ENCODE measurements at regions of chr6 and their contacts with region 1.

Region 1: DNA sequence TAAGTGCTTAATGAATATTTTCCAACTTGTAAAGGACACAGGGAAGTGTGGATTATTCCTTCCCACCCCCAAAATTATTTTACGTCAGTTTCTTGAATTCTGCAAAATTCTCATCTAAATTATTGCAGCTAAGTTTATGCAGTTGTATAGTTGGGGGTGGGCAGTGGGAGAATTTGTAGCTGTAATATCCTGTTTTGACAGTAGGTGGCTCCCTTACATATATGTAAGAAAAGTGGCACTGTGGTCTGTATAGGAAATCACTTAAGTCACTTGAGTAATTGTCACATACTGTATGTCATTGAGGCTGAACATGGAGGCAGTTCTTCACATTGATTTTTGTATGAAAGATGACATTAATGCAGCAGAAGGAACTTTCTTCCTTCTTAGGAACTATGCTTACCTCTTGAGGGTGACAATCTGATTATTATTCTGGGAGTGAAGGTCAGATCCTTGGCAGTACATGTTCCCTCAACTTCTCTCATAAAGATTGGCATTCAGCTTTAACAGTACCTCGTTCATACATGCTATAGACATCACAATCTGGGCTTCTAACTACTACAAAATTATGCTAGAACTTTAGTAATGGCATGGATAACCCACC is 14.7 kb upstream of the CFAP206 start:
- DNase-seq: peak; percentile 38
- CTCF ChIP-seq: peak; percentile 51

Region 2: GRCh38 chr6:87078983-87079616 is 314.0 kb before region 1 on chr6:
- CTCF ChIA-PET with region 1: interaction called, 13 read pairs
- POLR2A ChIA-PET with region 1: no interaction called
- DNase-seq: peak; percentile 64
- CTCF ChIP-seq: peak; percentile 75

Region 3: GRCh38 chr6:87356181-87356580 is 36.9 kb before region 1 on chr6:
- CTCF ChIA-PET with region 1: no interaction called
- POLR2A ChIA-PET with region 1: no interaction called
- DNase-seq: no peak
- CTCF ChIP-seq: no peak

Region 4: GRCh38 chr6:87366072-87366827 is 26.9 kb before region 1 on chr6:
- CTCF ChIA-PET with region 1: interaction called, 12 read pairs
- POLR2A ChIA-PET with region 1: no interaction called
- DNase-seq: no peak
- CTCF ChIP-seq: no peak

Region 5: DNA sequence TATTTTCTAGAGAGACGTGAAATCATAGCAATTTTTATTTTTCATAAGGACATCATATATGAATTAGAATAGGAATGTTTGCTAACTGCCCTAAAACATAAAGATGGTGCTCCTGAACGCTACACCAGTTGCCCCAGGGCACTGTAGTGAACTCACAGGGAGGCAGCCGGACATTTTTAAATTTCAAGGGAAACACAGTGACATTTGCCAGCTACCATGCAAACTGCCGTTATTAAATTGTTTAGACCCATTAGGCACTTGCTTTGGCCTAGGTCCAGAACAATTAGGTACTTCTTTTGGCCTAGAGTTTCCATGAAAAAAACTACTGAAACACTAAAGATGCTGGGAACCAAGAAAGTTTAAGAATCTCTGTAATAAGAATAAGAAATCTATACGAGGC is 10.3 kb before region 1 on chr6:
- CTCF ChIA-PET with region 1: interaction called, 19 read pairs
- POLR2A ChIA-PET with region 1: no interaction called
- DNase-seq: no peak
- CTCF ChIP-seq: no peak